Mammary epithelial cell (primary cell): ENCODE measurements at regions of chr5 and their contacts with region 1.

Region 1: DNA sequence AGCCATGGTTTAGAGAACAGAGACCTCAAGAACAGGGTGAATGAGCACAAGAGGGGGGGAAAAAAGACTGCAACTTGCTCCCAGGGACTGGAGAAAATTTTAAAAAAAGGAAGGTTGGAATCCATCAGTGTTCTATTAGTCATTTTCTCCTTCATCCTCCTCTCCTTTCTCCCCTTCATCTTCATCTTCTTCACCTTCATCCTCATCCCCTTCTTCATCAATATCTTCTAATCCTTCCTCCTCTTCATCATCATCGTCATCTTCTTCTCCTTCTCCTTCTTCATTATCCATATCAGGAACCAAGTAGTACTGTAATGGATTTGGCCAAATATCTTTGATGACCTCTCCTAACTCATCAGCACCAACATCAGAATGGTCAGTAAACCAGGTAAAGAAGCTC is 86.1 kb downstream of the LIX1 start:
- DNase-seq: no peak
- H3K4me3 ChIP-seq: no peak overlapping the region
- H3K27ac ChIP-seq: no peak overlapping the region
- H3K4me1 ChIP-seq: no peaks in the 10 kb centered on the region
- H3K27me3 ChIP-seq: peaks cover 6% of the 10 kb centered on the region
- CTCF ChIP-seq: no peak

Region 2: GRCh38 chr5:97111616-97112015 is 55.4 kb after region 1 on chr5:
- CTCF ChIA-PET with region 1: no interaction called
- dilution Hi-C with region 1: loop called (anchors 5 kb)
- in situ Hi-C with region 1: no loop called
- intact Hi-C with region 1: no loop called
- DNase-seq: no peak
- H3K4me3 ChIP-seq: no peak overlapping the region
- H3K27ac ChIP-seq: no peak overlapping the region
- H3K4me1 ChIP-seq: no peaks in the 10 kb centered on the region
- H3K27me3 ChIP-seq: peaks cover under 1% of the 10 kb centered on the region
- CTCF ChIP-seq: no peak